ENCODE measurements at regions of chr9 and their contacts with region 1.

Region 1: DNA sequence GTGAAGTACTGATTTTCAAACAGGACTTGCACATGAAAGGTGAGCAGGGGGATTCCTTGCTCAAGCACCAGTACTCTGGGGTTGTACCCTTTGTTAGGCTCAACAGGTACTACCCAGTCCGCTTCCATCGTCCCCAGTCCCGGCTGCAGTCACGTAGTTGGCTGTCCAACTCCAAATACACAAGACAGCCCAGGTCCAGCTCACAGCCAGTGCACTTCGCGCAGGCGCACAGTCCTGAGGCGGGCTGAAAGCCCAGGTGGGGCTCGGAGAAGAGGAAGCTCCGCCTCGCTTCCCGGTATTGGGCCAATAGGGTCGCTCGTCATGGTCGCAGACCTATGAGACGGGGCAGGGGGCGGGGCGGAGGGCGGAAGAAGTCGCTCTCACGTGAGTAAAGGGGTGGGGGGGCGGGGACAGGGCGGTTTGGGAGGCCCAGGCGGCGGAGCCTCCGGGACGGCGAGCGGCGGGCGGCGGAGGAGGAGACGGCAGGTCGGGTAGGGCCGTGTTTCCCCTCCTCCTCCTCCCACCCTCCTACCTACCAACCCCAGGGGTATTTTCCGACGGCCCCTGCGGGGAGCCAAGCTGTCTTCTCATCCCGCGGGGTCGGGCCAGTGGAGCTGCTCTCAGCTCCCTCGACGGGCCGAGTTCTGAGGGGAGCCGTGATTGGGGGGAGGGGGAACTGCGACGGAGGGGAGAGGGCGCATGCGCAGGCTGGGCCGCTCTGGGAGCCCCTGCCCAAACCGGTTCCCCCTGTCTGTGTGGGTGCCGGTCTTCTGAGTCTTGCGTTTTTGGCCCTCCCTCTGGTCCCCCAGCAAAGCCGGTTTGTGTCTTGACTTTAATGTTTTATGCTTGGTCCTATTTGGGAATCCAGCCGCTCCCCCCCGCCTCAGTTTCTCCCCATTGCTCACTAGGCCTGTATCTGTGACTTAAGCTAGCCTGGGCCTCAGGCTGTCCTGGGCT is at the start of gene RABGAP1:
- DNase-seq: peak; percentile 98

Region 2: GRCh38 chr9:122857815-122858214 is 83.1 kb before region 1 on chr9:
- CTCF ChIA-PET with region 1: no interaction called
- POLR2A ChIA-PET with region 1: no interaction called
- DNase-seq: no peak

Region 3: GRCh38 chr9:122904823-122905710 is 35.8 kb before region 1 on chr9 and contains the start of gene RC3H2:
- CTCF ChIA-PET with region 1: no interaction called
- POLR2A ChIA-PET with region 1: interaction called, 16 read pairs
- DNase-seq: peak; percentile 96

Region 4: DNA sequence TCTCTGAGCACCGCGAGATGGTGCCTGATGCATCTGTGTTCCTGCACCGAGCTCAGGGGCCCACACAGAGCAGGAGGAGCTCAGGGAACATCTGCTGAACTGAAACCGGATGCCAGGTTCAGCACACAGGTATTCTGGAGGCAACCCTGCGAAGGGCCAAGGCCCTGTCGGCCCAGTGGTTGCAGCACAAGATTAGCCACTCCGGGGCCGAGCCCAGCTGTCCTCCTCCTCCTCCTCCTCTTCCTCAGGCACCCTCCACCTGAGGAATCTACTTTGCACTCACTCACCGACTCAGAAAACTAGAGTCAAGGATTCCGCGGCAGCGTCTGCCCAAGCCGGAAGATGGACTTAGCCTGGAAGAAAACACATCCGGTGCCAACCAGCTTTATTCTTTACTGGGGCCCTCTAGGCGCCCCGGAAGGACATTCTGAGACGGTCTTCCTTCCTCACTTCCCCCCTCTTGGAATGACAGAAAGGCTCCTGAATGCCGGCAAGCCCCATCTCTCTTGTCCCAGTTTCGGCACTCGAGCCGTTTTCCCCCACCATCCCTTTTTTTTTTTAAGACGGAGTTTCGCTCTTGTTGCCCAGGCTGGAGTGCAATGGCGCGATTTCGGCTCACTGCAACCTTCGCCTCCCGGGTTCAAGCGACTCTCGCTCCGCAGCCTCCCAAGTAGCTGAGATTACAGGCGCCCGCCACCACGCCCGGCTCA is 27.8 kb before region 1 on chr9 and contains the start of gene ZBTB6:
- CTCF ChIA-PET with region 1: interaction called, 5 read pairs
- POLR2A ChIA-PET with region 1: interaction called, 15 read pairs
- DNase-seq: peak; percentile 73

Region 5: GRCh38 chr9:122951056-122951455 is 10.2 kb after region 1 on chr9:
- CTCF ChIA-PET with region 1: no interaction called
- POLR2A ChIA-PET with region 1: interaction called, 11 read pairs
- DNase-seq: no peak

Measured in HEK293T (cell line).